HepG2 (cell line): ENCODE measurements at regions of chr11 and their contacts with region 1.

Region 1: GRCh38 chr11:116691771-116692177 is 81.0 kb downstream of the BUD13 start:
- DNase-seq: peak; percentile 31
- ATAC-seq: peak; percentile 84
- H3K4me3 ChIP-seq: no peak overlapping the region
- H3K27ac ChIP-seq: no peak overlapping the region
- H3K4me1 ChIP-seq: peaks cover 16% of the 10 kb centered on the region
- H3K27me3 ChIP-seq: peaks cover 3 to 36% of the 10 kb centered on the region in 2 experiments; a peak in 3 of 5 replicates
- CTCF ChIP-seq: peak; percentile 95
- EP300 ChIP-seq: no peak
- POLR2A ChIP-seq: no peak
- RAD21 ChIP-seq: peak; percentile 91

Region 2: DNA sequence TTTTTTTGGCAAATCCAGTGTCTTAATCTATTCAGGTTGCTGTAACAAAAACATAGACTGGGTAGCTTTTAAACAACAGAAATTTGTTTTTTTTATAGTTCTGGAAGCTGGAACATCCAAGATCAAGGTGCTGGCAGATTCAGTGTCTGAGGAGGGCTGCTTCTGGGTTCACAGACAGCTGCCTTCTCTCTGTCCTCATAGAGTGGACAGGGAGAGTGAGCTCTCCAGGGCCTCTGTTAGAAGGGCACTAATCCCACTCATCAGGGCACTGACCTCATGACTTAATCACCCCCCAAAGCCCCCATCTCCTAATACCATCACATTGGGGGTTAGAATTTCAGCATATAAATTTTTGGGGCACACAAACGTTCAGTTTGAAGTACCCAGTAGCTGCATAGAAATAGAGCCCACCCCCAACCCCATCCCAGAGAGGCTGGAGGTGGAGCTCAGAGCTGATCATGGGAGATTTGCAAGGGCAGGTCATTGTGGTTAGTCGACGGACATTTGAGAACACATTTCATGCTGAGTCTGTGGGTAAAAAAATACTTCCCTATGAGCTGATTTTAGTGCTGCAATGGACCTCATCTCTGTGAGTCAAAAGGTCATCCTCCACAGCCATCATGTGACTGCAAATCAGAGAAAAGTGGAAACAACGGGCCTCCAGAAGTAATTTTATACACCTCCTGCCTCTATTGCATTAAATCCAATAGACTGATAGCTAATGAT is 984.4 kb before region 1 on chr11:
- CTCF ChIA-PET with region 1: no interaction called
- POLR2A ChIA-PET with region 1: no interaction called
- in situ Hi-C with region 1: no loop called
- intact Hi-C with region 1: no loop called
- DNase-seq: no peak
- ATAC-seq: no peak
- H3K4me3 ChIP-seq: no peak overlapping the region
- H3K27ac ChIP-seq: no peak overlapping the region
- H3K4me1 ChIP-seq: no peaks in the 10 kb centered on the region
- H3K27me3 ChIP-seq: peaks cover 1 to 20% of the 10 kb centered on the region in 2 experiments; a peak in 3 of 5 replicates
- CTCF ChIP-seq: no peak
- EP300 ChIP-seq: no peak
- POLR2A ChIP-seq: no peak
- RAD21 ChIP-seq: no peak

Region 3: DNA sequence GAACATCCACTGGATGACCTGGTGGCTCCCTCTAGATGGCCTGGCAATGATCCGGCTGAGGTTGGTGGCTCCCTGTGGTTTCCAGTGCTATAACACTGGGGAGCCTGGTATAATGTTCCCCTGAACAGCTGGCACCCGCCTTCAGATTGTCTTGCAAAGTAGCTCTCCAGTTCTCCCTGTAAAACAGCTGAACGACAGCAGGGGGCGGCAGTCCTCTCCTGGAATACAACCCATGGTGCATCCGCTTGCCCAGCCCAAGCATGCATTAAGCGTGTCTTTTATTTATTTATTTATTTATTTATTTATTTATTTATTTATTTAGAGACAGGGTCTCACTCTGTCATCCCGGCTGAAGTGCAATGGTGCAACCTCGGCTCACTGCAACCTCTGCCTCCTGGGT is 177.9 kb before region 1 on chr11:
- CTCF ChIA-PET with region 1: interaction called, 12 read pairs
- POLR2A ChIA-PET with region 1: no interaction called
- in situ Hi-C with region 1: loop called (anchors 5 kb)
- intact Hi-C with region 1: loop called (anchors 1 kb)
- DNase-seq: peak; percentile 64
- ATAC-seq: peak; percentile 81
- H3K4me3 ChIP-seq: no peak overlapping the region
- H3K27ac ChIP-seq: no peak overlapping the region
- H3K4me1 ChIP-seq: no peaks in the 10 kb centered on the region
- H3K27me3 ChIP-seq: no peaks in the 10 kb centered on the region; a peak in 1 of 5 replicates
- CTCF ChIP-seq: peak; percentile 72
- EP300 ChIP-seq: no peak
- POLR2A ChIP-seq: no peak
- RAD21 ChIP-seq: peak; percentile 61

Region 4: DNA sequence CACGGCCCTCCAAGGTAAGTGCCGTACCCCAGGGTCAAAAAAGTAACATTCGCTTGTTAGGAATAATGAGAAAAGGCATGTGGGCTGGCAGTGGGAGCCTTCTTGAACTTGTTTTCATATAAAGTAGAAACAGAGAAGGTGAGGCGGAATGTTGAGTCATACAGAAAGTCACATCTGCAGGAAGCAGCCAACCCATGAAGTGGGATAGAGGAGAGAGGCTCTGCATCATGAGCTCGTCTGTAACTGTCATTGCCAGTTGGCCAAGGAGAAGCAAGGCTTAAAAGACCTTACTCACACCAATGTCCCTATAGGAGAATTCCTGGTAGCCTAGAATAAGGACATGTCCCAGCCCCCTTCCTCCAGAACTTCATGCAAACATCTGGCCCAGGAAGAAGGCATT is 172.3 kb before region 1 on chr11:
- CTCF ChIA-PET with region 1: interaction called, 12 read pairs
- POLR2A ChIA-PET with region 1: no interaction called
- in situ Hi-C with region 1: loop called (anchors 5 kb)
- intact Hi-C with region 1: loop called (anchors 1 kb)
- DNase-seq: no peak
- ATAC-seq: no peak
- H3K4me3 ChIP-seq: no peak overlapping the region
- H3K27ac ChIP-seq: no peak overlapping the region
- H3K4me1 ChIP-seq: no peaks in the 10 kb centered on the region
- H3K27me3 ChIP-seq: no peaks in the 10 kb centered on the region; a peak in 1 of 5 replicates
- CTCF ChIP-seq: no peak
- EP300 ChIP-seq: no peak
- POLR2A ChIP-seq: no peak
- RAD21 ChIP-seq: no peak

Region 5: GRCh38 chr11:116641561-116642045 is 50.2 kb before region 1 on chr11:
- CTCF ChIA-PET with region 1: no interaction called
- POLR2A ChIA-PET with region 1: no interaction called
- in situ Hi-C with region 1: loop called (anchors 5 kb)
- intact Hi-C with region 1: loop called (anchors 1 kb)
- DNase-seq: no peak
- ATAC-seq: peak; percentile 92
- H3K4me3 ChIP-seq: no peak overlapping the region
- H3K27ac ChIP-seq: no peak overlapping the region
- H3K4me1 ChIP-seq: no peaks in the 10 kb centered on the region
- H3K27me3 ChIP-seq: no peaks in the 10 kb centered on the region; a peak in 1 of 5 replicates
- CTCF ChIP-seq: peak; percentile 94
- EP300 ChIP-seq: no peak
- POLR2A ChIP-seq: no peak
- RAD21 ChIP-seq: peak; percentile 90